Cardiac septum (tissue), 1 donor: ENCODE measurements at regions of chr2 and their contacts with region 1.

Region 1: DNA sequence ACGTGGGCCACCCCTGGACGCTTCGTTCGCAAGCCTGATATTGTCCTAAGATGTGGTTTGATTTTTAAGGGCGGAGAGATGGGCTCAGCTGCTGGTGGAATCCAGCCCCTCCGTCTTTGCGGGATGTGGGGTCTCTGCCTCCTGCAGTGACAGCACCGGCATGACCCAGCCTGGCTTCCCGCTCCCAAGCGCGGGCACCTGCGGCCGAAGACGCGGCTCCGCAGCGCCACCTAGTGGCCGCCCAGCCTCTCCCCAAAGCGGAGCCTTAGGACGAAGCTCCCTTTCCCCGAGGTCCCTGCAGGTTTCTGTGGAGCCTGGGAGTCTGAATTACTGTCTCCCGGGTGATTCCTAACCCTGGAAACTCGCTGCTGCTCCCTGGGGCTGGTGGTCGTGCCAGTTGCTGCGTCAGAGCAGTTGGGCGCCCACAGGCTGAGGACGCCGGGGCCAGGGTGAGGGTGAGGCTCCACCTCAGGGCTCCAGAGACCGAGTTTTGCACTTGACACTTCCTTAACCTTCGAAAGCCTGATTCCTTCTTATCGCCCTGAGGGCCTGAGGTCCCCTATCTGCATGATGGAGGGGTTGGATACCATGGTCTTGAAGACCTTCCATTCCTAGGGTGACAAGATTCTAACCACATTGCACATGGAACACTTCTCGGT is 137.5 kb downstream of the TPO start:
- DNase-seq: no peak

Region 2: GRCh38 chr2:714005-714741 is 836.6 kb before region 1 on chr2:
- intact Hi-C with region 1: loop called (anchors 2 kb)
- DNase-seq: no peak

Region 3: DNA sequence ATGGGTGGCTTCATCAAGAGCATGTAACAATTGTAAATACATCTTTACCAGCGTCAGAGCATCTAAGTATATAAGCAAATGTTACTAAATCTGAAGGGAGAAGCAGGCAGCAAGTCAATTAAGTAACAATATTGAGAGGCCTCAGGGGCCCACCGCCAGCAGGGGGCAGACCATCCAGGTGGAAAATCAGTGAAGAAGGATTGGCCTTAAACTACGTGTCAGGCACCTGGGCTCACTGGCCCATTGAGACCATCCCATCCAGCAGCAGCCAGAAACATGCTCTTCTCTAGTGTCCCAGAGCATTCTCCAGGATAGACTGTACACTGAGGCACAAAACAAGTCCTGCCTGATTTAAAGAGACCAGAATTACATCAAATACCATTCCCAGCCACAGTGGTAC is 696.3 kb before region 1 on chr2:
- intact Hi-C with region 1: loop called (anchors 5 kb)
- DNase-seq: no peak

Region 4: GRCh38 chr2:1400943-1401735 is 149.6 kb before region 1 on chr2:
- intact Hi-C with region 1: no loop called
- DNase-seq: no peak

Region 5: DNA sequence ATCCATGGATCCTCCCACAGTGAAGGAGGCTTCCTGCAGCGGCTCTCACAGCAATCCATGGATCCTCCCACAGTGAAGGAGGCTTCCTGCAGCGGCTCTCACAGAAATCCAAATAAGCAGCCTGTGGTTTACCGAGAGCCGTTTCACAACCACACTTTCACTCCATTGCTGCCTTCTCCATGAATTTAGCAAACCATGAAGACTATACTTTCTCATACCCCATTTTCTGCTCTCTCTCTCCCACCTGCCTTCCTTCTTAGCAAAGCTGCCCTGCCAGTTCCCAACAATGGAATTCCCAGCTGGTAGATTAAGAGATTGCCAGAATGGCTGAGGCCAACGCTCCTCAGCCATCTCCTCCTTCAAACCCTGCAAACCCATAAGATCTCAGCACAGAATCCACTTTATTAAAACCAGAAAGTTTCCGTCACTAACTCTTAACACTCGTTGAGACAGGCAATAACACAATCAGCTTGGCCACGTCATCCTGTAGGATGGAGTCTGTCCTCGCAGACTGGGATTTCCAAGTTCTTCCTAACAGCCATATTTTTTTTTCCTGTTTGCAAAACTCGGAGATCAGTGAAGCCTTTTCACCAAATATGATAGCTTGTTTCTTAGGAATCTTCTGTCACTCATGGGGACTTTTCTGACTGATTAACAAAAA is 31.3 kb after region 1 on chr2:
- intact Hi-C with region 1: no loop called
- DNase-seq: no peak

Region 6: DNA sequence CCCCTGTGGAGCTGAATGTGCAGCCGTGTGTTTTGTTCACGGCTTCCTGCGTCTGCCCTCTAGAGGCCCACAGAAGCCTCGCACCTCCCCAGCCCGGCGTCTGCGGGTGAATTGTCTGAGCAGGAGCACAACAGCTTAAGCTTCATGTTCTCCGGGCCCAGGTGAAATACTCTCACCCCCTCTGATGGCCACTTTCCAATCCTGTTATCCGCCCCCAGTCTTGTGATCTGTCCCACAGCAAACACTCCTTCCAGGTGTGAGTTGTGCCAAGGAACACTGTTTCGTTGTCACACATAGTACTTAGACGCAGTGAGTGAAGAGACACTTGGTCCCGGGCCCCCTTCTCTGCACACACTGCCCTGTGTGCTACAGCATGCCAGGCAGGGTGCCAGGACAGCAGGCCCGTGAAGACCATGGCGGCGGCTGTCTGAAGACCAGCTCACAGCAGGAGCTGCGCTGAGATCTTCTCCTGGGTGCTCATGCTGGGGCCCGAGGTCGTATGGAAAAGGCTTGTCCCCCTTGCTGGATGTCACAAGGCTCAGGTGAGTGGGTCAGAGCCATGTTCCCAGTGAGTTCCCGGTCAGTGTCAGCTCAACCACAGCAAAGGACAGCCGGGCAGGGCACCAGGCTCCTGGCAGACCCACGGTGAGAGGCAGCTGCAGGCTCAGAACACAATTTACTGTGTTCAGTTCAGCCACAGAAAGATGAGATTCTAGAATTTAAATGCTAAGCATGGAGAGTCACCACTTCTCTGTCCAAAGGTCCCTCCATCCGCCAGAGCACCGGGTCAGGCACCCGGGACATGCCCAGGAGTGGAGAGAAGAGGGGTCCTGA is 200.4 kb after region 1 on chr2:
- intact Hi-C with region 1: loop called (anchors 5 kb)
- DNase-seq: peak; percentile 76

Region 7: DNA sequence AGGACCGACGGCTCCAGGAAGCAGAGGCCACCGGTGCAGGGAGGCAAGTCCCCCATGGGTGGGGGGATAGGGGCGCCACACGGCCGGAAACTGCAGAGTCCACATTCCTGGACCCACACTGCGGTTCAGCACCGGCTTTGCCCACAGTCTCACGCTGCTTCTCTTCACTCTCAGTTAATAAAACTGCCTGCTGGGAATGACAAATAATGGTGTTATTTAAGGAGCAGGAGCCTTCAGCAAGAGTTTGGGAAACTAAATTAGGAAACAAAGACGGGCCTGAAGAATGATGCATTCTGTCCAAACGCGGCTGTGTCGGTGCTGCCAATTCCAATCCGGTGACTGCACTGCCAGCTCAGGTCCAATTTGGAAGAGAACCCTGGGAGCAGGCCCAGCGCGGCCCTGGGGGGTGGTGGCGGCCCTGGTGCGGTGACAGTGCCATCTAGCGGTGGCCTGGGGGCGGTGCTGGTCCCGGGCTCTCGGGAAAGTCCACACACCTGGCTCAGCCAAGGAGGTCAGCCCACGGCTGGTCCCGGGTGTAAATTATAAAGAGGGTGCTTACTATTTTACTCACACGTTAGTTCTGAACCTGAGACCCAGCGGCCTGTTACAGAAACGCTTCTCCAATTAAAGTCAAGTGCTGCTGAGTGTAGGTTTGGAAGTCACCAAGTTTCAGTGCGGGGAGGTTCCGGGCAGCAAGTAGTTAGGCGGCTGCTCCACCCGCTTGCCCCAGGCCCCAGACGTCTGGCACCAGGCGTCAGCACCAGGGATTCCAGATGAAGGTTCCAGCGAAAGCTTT is 266.7 kb after region 1 on chr2:
- intact Hi-C with region 1: loop called (anchors 5 kb)
- DNase-seq: peak; percentile 92